Cardiac septum (tissue), 1 donor: ENCODE measurements at regions of chr2 and their contacts with region 1.

Region 1: GRCh38 chr2:119659601-119660342 is 19.2 kb upstream of the TMEM177 start:
- DNase-seq: no peak

Region 2: GRCh38 chr2:119407430-119408220 is 252.1 kb before region 1 on chr2:
- intact Hi-C with region 1: loop called (anchors 1 kb)
- DNase-seq: no peak

Region 3: GRCh38 chr2:119517433-119517832 is 142.3 kb before region 1 on chr2:
- intact Hi-C with region 1: loop called (anchors 10 kb)
- DNase-seq: no peak

Region 4: GRCh38 chr2:119641562-119642258 is 18.1 kb before region 1 on chr2:
- intact Hi-C with region 1: loop called (anchors 2 kb)
- DNase-seq: peak; percentile 90

Region 5: DNA sequence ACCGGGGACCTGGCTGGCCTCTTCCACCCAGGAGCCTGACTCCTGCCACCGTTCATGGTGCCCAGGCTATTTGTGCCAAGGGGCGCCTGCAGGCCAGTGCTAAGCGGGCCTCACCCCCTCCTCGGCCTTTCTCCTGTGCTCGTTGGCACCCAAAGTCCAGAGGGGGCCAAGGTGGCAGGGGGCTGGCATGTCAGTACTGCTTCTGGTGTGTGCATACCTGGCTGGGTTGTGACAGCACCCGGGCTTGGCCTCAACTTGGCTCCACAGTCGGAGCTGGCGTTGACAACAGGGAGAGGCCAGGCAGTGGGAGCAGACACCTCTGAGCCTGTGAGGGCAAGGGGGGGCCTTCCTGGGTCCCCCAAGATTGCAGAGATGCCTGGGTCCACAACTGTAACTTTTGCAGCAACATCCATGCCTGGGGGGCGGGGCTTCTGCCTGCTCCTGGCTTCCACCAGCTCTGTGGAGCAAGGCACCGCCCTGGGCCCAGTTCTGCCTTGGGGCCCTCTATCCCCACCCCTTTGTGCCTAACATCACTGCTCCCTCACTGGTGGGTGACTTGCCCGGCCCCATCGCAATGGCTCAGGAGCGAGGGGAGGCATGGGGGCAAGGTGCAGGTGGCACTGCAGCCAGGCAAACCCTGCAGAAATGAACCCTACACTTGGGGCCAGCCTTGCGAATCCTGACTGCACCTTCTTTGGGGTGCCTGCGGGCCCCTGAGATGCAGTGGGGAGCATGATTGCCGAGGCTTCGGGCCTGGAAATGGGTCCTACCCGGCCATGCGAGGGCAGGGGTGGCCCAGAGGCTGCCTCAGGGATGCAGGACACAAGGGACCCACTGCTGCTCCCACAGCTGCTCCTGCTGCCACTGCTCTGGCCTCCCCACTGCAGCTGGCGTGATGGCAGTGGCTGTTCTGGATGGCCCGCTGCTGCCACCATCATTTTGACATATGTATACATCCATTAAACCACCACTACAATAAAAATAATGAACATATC is 135.8 kb after region 1 on chr2:
- intact Hi-C with region 1: no loop called
- DNase-seq: no peak